Heart right ventricle (tissue), 16 donors: ENCODE measurements at regions of chr19 and their contacts with region 1.

Region 1: GRCh38 chr19:47391510-47392223 is 27.7 kb downstream of the MEIS3 start:
- DNase-seq: peak; percentile 65 to 78
- ATAC-seq: peak; percentile 62 to 76 (median 68)
- H3K4me3 ChIP-seq: no peak overlapping the region
- H3K27ac ChIP-seq: no peak overlapping the region
- H3K4me1 ChIP-seq: peaks cover 0 to 27% (median 0%) of the 10 kb centered on the region in 9 donors
- H3K27me3 ChIP-seq: peaks cover 0 to 20% (median 10%) of the 10 kb centered on the region in 7 donors
- CTCF ChIP-seq: peak; percentile 61 to 93 (median 88)

Region 2: DNA sequence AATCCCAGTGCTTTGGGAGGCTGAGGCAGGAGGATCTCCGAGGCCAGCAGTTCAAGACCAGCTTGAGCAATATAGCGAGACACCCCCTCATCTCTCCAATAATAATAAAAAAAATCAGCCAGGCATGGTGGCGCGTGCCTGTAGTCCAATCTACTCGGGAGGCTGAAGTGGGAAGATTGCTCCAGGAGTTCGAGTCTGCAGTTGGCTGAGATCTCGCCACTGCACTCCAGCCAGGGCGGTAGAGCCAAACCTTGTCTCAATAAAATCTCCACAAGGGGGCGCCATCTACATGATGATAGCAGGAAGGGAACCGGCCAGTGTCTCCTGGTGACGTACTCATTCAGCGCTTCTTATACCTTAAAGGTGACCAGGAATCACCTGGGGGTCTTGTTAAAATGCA is 95.6 kb before region 1 on chr19:
- intact Hi-C with region 1: loop called in 9 of 10 experiments (anchors 1 to 5 kb)
- DNase-seq: peak; percentile 32 to 83
- ATAC-seq: peak; percentile 67 to 88 (median 85)
- H3K4me3 ChIP-seq: no peak overlapping the region
- H3K27ac ChIP-seq: no peak overlapping the region
- H3K4me1 ChIP-seq: peaks cover 0 to 5% (median 0%) of the 10 kb centered on the region in 9 donors
- H3K27me3 ChIP-seq: no peaks in the 10 kb centered on the region
- CTCF ChIP-seq: peak; percentile 57 to 85 (median 76)

Region 3: GRCh38 chr19:47302249-47302648 is 89.4 kb before region 1 on chr19:
- intact Hi-C with region 1: loop called in 4 of 10 experiments (anchors 5 kb)
- DNase-seq: no peak
- ATAC-seq: no peak
- H3K4me3 ChIP-seq: no peak overlapping the region
- H3K27ac ChIP-seq: no peak overlapping the region
- H3K4me1 ChIP-seq: peaks cover 0 to 11% (median 0%) of the 10 kb centered on the region in 9 donors
- H3K27me3 ChIP-seq: no peaks in the 10 kb centered on the region
- CTCF ChIP-seq: no peak

Region 4: DNA sequence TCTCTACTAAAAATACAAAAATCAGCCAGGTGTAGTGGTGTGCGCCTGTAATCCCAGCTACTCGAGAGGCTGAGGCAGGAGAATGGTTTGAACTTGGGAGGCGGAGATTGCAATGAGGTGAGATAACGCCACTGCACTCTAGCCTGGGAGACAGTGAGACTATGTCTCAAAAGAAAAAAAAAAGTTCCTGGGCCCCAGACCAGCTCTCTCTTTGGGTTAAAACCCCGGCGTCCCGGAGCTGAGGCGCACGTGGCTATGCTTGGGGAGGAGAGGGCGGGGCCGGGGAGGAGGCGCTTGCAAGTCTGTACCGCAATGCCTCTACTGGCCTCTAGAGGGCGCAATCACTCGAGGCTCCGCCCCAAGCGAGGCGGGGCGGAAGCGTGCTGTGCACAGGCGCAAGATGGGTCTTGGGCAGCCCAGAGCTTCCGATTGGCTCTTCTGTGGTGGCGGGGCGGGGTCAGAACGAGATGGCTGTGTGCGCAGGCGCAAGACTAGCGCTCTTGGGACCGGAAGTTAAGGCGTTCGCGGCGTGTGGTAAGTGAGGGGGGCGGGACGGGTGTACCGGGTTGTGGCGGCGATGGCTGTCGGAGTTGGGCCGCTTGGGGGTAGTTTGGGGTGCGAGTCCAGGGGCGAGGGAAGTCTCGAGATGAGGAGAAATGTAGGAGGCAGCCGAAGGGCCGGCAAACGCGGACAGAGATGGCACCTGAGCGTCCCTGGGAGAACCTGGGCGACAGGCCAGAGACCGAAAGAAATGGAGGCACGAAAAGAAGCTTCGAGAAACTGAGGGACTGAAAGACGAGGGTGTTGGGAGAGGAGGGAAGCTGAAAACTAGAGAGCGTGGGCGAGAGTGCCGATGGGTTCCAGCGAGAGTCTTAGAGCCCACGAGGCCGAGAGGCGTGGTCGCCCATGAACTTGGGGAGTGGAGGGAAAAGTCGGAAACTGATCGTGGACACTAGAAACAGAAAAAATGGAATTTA is 42.6 kb before region 1 on chr19 and contains the start of gene DHX34:
- intact Hi-C with region 1: loop called in 1 of 10 experiments (anchors 5 kb)
- DNase-seq: peak; percentile 98 to 99
- ATAC-seq: peak; percentile 100
- H3K4me3 ChIP-seq: peak within 1 kb of the TSS; percentile 50 to 96 (median 88)
- H3K27ac ChIP-seq: peak within 1 kb of the TSS in 9 of 10 donors; percentile 5 to 93 (median 78)
- H3K4me1 ChIP-seq: peaks cover 0 to 40% (median 17%) of the 10 kb centered on the region in 9 donors
- H3K27me3 ChIP-seq: no peaks in the 10 kb centered on the region
- CTCF ChIP-seq: peak; percentile 96 to 100 (median 100)
- total RNA-seq, gene DHX34: 4.4 to 8.8 (median 5.5) TPM

Region 5: DNA sequence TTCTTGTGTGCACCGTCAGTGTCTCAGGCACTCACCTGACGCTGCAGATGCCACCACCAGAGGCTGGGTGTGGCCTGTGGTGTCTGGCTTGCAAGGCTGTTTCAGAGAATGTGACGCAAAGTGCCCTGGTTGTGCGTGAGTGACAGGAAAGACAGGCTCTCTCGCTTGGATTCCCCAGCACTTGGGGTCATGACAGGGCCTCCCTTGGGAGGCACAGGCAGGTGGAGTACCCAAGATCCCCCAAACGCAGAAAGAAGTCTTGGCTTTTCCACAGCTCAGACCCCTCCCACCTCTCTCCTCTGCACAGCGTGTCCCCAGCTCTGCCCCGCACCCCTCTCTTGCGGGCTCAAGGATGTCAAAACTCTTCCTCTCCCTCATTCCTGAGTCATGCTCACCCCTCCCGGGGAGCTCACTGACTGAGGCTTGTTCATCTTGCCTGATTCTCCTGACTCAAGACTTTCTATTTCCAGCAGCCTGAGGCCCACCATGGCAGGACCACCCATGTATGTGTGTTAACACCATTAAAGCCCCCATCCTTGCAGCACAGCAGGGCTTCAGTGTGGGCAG is 21.5 kb before region 1 on chr19:
- intact Hi-C with region 1: loop called in 1 of 10 experiments (anchors 2 kb)
- DNase-seq: no peak
- ATAC-seq: peak in 3 of 8 donors; percentile 58 to 72 (median 67)
- H3K4me3 ChIP-seq: no peak overlapping the region
- H3K27ac ChIP-seq: peak overlapping the region in 2 of 10 donors; percentile 64 to 88
- H3K4me1 ChIP-seq: peaks cover 0 to 19% (median 0%) of the 10 kb centered on the region in 9 donors
- H3K27me3 ChIP-seq: no peaks in the 10 kb centered on the region
- CTCF ChIP-seq: no peak

Region 6: DNA sequence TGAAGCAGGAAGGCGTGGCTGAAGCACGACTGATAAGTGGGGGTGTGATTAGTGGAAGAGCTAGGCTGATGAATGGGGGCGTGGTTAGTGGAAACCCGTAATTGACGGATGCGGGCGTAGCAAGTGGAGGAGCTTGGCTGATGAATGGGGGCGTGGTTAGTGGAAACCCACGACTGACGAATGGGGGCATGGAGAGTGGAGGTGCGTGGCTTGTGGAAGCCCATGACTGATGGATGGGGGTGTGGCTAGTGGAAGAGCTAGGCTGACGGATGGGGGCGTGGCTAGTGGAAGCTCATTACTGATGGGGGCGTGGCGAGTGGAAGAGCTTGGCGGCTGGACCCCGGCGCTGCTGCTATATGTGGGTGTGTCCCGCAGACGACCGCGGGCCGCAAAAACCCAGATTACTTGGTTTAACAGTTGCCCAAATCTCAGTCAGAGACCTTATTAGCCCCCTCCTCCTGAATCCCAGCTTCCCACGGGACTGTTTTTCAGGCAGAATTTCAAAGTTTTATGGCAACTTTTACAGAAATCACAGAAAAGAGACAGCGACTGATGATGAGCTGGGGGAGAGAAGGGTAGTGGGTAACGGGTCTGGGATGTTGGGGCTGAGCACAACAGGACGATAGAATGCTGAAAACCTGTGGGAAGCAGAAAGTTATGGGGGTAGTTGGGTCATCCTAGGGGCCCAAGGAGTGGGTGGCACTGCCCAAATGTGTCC is 36.7 kb after region 1 on chr19:
- intact Hi-C with region 1: no loop called
- DNase-seq: peak; percentile 80 to 90
- ATAC-seq: peak; percentile 78 to 94 (median 87)
- H3K4me3 ChIP-seq: peak overlapping the region in 2 of 10 donors; percentile 10 to 15
- H3K27ac ChIP-seq: no peak overlapping the region
- H3K4me1 ChIP-seq: peaks cover 7 to 27% (median 21%) of the 10 kb centered on the region in 9 donors
- H3K27me3 ChIP-seq: peaks cover 9 to 93% (median 75%) of the 10 kb centered on the region in 7 donors
- CTCF ChIP-seq: no peak